ENCODE measurements at regions of chr17 and their contacts with region 1.

Region 1: GRCh38 chr17:38815576-38816193 is 9.4 kb downstream of the CWC25 start:
- DNase-seq: no peak
- ATAC-seq: no peak
- H3K4me3 ChIP-seq: no peak overlapping the region
- H3K4me1 ChIP-seq: no peaks in the 10 kb centered on the region
- CTCF ChIP-seq: no peak

Region 2: GRCh38 chr17:38415250-38416194 is 400.2 kb before region 1 on chr17:
- intact Hi-C with region 1: no loop called
- DNase-seq: no peak
- ATAC-seq: peak; percentile 57
- H3K4me3 ChIP-seq: no peak overlapping the region
- H3K4me1 ChIP-seq: peaks cover 4% of the 10 kb centered on the region
- CTCF ChIP-seq: no peak

Region 3: GRCh38 chr17:38761612-38762011 is 54.1 kb before region 1 on chr17:
- intact Hi-C with region 1: loop called in 1 of 2 experiments (anchors 10 kb)
- DNase-seq: peak in 2 of 3 donors; percentile 27 to 42
- ATAC-seq: peak; percentile 56
- H3K4me3 ChIP-seq: no peak overlapping the region
- H3K4me1 ChIP-seq: no peaks in the 10 kb centered on the region
- CTCF ChIP-seq: no peak

Measured in mucosa of descending colon (tissue), 3 donors.